ENCODE measurements at regions of chr1 and their contacts with region 1.

Region 1: DNA sequence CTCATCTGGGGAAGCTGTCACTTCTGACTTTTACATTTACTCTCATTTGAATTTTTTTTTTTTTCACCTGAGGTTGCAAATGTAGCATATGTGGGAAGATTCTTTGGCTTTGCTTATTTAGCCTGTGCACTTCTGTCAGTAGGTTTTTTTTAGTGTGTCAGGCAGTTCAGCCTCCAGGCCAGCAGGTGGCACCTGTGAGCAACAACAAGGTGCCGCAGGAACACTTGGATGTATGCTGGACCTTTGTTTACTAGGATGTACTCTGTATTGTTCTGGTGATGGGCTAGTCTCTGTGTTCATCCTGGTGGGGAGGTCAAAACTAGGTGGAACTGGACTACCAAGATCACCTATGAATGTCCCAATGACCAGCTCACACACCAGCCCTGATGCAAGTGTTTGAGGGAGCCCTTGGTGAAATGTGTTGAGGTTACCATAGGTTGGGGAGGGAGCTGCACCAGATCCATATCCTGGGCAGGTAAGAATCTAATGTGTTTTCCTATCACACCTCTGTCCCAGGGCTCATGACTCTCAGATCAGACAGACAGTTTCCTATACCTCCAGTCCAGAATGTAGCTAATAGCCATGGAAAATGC is 618.2 kb downstream of the BRINP3 start:
- DNase-seq: peak; percentile 17
- ATAC-seq: peak; percentile 63
- H3K4me3 ChIP-seq: no peak overlapping the region
- H3K27ac ChIP-seq: no peak overlapping the region
- H3K4me1 ChIP-seq: no peaks in the 10 kb centered on the region
- H3K27me3 ChIP-seq: no peaks in the 10 kb centered on the region
- CTCF ChIP-seq: peak; percentile 58
- EP300 ChIP-seq: no peak
- POLR2A ChIP-seq: no peak
- RAD21 ChIP-seq: 0 out of 2 replicates have a peak, but pooled peaks have one; percentile 28

Region 2: GRCh38 chr1:190168893-190169667 is 309.6 kb after region 1 on chr1:
- CTCF ChIA-PET with region 1: no interaction called
- POLR2A ChIA-PET with region 1: no interaction called
- in situ Hi-C with region 1: no loop called
- intact Hi-C with region 1: no loop called
- DNase-seq: no peak
- ATAC-seq: no peak
- H3K4me3 ChIP-seq: no peak overlapping the region
- H3K27ac ChIP-seq: no peak overlapping the region
- H3K4me1 ChIP-seq: no peaks in the 10 kb centered on the region
- H3K27me3 ChIP-seq: no peaks in the 10 kb centered on the region
- CTCF ChIP-seq: no peak
- EP300 ChIP-seq: no peak
- POLR2A ChIP-seq: no peak
- RAD21 ChIP-seq: no peak

Region 3: GRCh38 chr1:190373705-190374336 is 514.3 kb after region 1 on chr1:
- CTCF ChIA-PET with region 1: interaction called, 10 read pairs
- POLR2A ChIA-PET with region 1: no interaction called
- in situ Hi-C with region 1: no loop called
- intact Hi-C with region 1: loop called (anchors 1 kb)
- DNase-seq: peak; percentile 15
- ATAC-seq: peak; percentile 97
- H3K4me3 ChIP-seq: no peak overlapping the region
- H3K27ac ChIP-seq: no peak overlapping the region
- H3K4me1 ChIP-seq: no peaks in the 10 kb centered on the region
- H3K27me3 ChIP-seq: no peaks in the 10 kb centered on the region
- CTCF ChIP-seq: peak; percentile 69
- EP300 ChIP-seq: no peak
- POLR2A ChIP-seq: no peak
- RAD21 ChIP-seq: 0 out of 2 replicates have a peak, but pooled peaks have one; percentile 35

Measured in HepG2 (cell line).